OCI-LY7 (cell line): ENCODE measurements at regions of chr15 and their contacts with region 1.

Region 1: GRCh38 chr15:89760303-89761008 is 9.4 kb upstream of the MESP1 start:
- DNase-seq: peak; percentile 64
- H3K4me3 ChIP-seq: no peak overlapping the region
- H3K27ac ChIP-seq: no peak overlapping the region
- H3K4me1 ChIP-seq: no peaks in the 10 kb centered on the region
- CTCF ChIP-seq: peak; percentile 93

Region 2: GRCh38 chr15:89860891-89861290 is 100.4 kb after region 1 on chr15:
- CTCF ChIA-PET with region 1: interaction called, 17 read pairs
- POLR2A ChIA-PET with region 1: no interaction called
- intact Hi-C with region 1: no loop called
- DNase-seq: no peak
- H3K4me3 ChIP-seq: no peak overlapping the region
- H3K27ac ChIP-seq: no peak overlapping the region
- H3K4me1 ChIP-seq: no peaks in the 10 kb centered on the region
- CTCF ChIP-seq: no peak

Region 3: GRCh38 chr15:89874926-89875564 is 114.6 kb after region 1 on chr15:
- CTCF ChIA-PET with region 1: interaction called, 5 read pairs
- POLR2A ChIA-PET with region 1: interaction called, 5 read pairs
- intact Hi-C with region 1: loop called (anchors 1 kb)
- DNase-seq: peak; percentile 87
- H3K4me3 ChIP-seq: no peak overlapping the region
- H3K27ac ChIP-seq: no peak overlapping the region
- H3K4me1 ChIP-seq: peaks cover 5% of the 10 kb centered on the region
- CTCF ChIP-seq: peak; percentile 99

Region 4: GRCh38 chr15:90001683-90002427 is 241.4 kb after region 1 on chr15:
- CTCF ChIA-PET with region 1: no interaction called
- POLR2A ChIA-PET with region 1: no interaction called
- intact Hi-C with region 1: loop called (anchors 2 kb)
- DNase-seq: peak; percentile 57
- H3K4me3 ChIP-seq: peak overlapping the region; percentile 80
- H3K27ac ChIP-seq: no peak overlapping the region
- H3K4me1 ChIP-seq: peaks cover 38% of the 10 kb centered on the region
- CTCF ChIP-seq: no peak

Region 5: GRCh38 chr15:90071208-90071807 is 310.9 kb after region 1 on chr15:
- CTCF ChIA-PET with region 1: no interaction called
- POLR2A ChIA-PET with region 1: no interaction called
- intact Hi-C with region 1: loop called (anchors 5 kb)
- DNase-seq: peak; percentile 88
- H3K4me3 ChIP-seq: no peak overlapping the region
- H3K27ac ChIP-seq: no peak overlapping the region
- H3K4me1 ChIP-seq: peaks cover 20% of the 10 kb centered on the region
- CTCF ChIP-seq: peak; percentile 95